Transverse colon (tissue), 4 donors: ENCODE measurements at regions of chr13 and their contacts with region 1.

Region 1: DNA sequence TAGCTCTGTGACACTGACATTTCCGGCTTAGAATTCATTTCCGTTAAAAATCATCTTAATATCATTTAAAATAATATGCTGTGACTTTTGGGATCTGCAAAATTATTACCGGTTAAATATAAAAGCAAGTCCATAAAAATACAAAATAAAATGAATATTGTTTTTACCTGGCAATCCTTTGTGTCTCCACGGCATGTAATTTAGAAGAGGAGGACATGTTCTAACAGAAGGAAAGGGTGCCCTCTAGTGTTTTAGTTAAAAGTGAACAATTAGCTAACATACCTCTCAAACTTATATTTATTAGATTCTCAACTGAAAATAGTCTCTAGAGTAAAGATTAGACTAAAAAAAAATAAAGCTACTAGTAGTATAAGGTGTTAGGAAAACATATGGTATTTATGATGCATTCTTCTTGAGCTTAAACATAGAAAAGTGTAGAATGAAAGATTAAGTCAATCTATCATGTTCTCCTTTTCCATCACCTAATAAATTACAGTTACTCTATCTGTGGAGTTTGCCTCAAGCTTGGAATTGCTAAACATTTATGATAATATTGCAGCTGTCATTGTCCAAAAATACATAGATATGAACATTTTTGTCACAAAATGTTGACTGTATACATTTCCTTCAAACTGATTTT is 676.7 kb upstream of the SPRY2 start:
- DNase-seq: no peak
- H3K4me3 ChIP-seq: no peak overlapping the region
- H3K27ac ChIP-seq: no peak overlapping the region
- H3K4me1 ChIP-seq: no peaks in the 10 kb centered on the region
- H3K27me3 ChIP-seq: no peaks in the 10 kb centered on the region
- CTCF ChIP-seq: peak; percentile 40 to 48 (median 45)
- EP300 ChIP-seq: no peak
- POLR2A ChIP-seq: no peak

Region 2: DNA sequence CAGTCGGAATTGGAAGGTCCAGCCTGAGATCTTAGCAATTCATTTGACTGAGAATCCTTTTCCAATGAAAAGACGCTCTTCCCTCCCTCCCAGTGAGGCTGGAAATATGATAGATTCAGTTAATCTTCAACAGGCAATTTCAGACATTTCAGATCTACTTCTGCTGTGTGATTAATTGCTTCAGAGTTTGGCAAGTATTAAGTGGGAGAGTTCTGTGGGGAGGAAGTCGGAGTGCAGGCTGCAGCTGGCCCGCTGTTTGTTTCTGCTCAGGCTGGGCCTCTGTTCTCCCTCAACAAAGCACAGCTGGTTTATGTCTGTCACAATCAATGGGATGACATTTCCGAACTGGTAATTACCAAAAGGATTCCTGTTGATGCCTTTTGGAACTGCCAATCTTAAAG is 1358.5 kb before region 1 on chr13:
- in situ Hi-C with region 1: loop called in 1 of 4 experiments (anchors 25 kb)
- intact Hi-C with region 1: no loop called
- DNase-seq: no peak
- H3K4me3 ChIP-seq: no peak overlapping the region
- H3K27ac ChIP-seq: no peak overlapping the region
- H3K4me1 ChIP-seq: peaks cover 0 to 5% (median 0%) of the 10 kb centered on the region in 4 donors
- H3K27me3 ChIP-seq: no peaks in the 10 kb centered on the region
- CTCF ChIP-seq: no peak
- EP300 ChIP-seq: no peak
- POLR2A ChIP-seq: no peak

Region 3: GRCh38 chr13:81247711-81248110 is 230.1 kb after region 1 on chr13:
- in situ Hi-C with region 1: no loop called
- intact Hi-C with region 1: no loop called
- DNase-seq: no peak
- H3K4me3 ChIP-seq: no peak overlapping the region
- H3K27ac ChIP-seq: no peak overlapping the region
- H3K4me1 ChIP-seq: no peaks in the 10 kb centered on the region
- H3K27me3 ChIP-seq: no peaks in the 10 kb centered on the region
- CTCF ChIP-seq: no peak
- EP300 ChIP-seq: no peak
- POLR2A ChIP-seq: no peak